Endothelial cell of umbilical vein (primary cell): ENCODE measurements at regions of chr1 and their contacts with region 1.

Region 1: GRCh38 chr1:52552505-52553361 is at the start of gene TUT4:
- DNase-seq: peak; percentile 76
- H3K4me3 ChIP-seq: peak within 1 kb of the TSS; percentile 80 to 97 (median 96)
- H3K27ac ChIP-seq: peak within 1 kb of the TSS; percentile 80
- H3K4me1 ChIP-seq: peaks cover 11% of the 10 kb centered on the region
- H3K27me3 ChIP-seq: no peaks in the 10 kb centered on the region
- CTCF ChIP-seq: peak; percentile 4 to 7
- POLR2A ChIP-seq: no peak
- total RNA-seq, gene TUT4: 40.5 and 41.2 TPM in 2 replicates

Region 2: GRCh38 chr1:51636764-51637522 is 915.8 kb before region 1 on chr1:
- CTCF ChIA-PET with region 1: no interaction called
- POLR2A ChIA-PET with region 1: no interaction called
- dilution Hi-C with region 1: no loop called
- intact Hi-C with region 1: no loop called
- DNase-seq: peak; percentile 64
- H3K4me3 ChIP-seq: no peak overlapping the region
- H3K27ac ChIP-seq: peak overlapping the region; percentile 70
- H3K4me1 ChIP-seq: peaks cover 12% of the 10 kb centered on the region
- H3K27me3 ChIP-seq: no peaks in the 10 kb centered on the region
- CTCF ChIP-seq: no peak
- POLR2A ChIP-seq: no peak

Region 3: GRCh38 chr1:52404116-52404986 is 148.4 kb before region 1 on chr1 and contains the starts of genes ORC1 and PRPF38A:
- CTCF ChIA-PET with region 1: no interaction called
- POLR2A ChIA-PET with region 1: interaction called, 4 read pairs
- dilution Hi-C with region 1: no loop called
- intact Hi-C with region 1: loop called (anchors 1 kb)
- DNase-seq: peak; percentile 97
- H3K4me3 ChIP-seq: peak within 1 kb of the TSS; percentile 57 to 98 (median 83)
- H3K27ac ChIP-seq: peak within 1 kb of the TSS; percentile 98
- H3K4me1 ChIP-seq: peaks cover 14% of the 10 kb centered on the region
- H3K27me3 ChIP-seq: no peaks in the 10 kb centered on the region
- CTCF ChIP-seq: peak; percentile 60 to 75
- POLR2A ChIP-seq: peak; percentile 82
- total RNA-seq, gene ORC1: 11.0 and 12.0 TPM in 2 replicates
- total RNA-seq, gene PRPF38A: 38.4 and 42.0 TPM in 2 replicates

Region 4: DNA sequence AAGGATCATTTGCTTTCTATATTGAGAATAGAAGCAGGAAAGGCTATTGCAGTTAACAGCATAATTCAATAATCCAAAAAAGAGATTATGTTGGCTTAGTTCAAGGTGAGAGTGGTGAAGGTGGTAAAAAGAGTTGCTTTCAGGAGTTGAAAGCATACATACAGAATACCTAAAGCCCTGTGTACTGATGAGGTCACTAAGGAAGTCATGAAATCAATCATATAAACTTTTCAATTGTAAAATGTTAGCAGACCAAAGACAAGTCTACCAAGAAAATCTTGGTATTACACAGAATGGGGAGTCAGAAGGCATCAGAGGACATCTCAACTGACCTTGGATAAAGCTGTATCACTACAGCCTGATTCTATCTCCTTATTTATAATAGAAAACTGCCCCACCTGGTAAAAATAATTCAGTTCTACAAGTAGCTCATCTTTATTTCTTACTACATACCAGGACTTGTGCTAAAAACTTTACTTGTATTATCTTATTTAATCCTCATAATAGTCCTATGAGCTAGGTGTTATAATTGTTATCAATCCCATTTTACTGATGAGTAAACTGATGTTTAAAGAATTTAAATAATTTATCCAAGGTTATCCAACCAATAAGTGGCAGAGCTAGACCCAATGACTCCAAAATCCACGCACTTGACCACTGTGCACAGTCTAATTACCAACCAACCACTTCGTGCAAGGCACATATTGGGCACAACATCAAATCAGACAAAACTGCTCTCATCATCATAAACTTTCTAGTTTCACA is 40.7 kb before region 1 on chr1:
- CTCF ChIA-PET with region 1: no interaction called
- POLR2A ChIA-PET with region 1: no interaction called
- dilution Hi-C with region 1: no loop called
- intact Hi-C with region 1: no loop called
- DNase-seq: no peak
- H3K4me3 ChIP-seq: no peak overlapping the region
- H3K27ac ChIP-seq: no peak overlapping the region
- H3K4me1 ChIP-seq: no peaks in the 10 kb centered on the region
- H3K27me3 ChIP-seq: no peaks in the 10 kb centered on the region
- CTCF ChIP-seq: no peak
- POLR2A ChIP-seq: no peak

Region 5: DNA sequence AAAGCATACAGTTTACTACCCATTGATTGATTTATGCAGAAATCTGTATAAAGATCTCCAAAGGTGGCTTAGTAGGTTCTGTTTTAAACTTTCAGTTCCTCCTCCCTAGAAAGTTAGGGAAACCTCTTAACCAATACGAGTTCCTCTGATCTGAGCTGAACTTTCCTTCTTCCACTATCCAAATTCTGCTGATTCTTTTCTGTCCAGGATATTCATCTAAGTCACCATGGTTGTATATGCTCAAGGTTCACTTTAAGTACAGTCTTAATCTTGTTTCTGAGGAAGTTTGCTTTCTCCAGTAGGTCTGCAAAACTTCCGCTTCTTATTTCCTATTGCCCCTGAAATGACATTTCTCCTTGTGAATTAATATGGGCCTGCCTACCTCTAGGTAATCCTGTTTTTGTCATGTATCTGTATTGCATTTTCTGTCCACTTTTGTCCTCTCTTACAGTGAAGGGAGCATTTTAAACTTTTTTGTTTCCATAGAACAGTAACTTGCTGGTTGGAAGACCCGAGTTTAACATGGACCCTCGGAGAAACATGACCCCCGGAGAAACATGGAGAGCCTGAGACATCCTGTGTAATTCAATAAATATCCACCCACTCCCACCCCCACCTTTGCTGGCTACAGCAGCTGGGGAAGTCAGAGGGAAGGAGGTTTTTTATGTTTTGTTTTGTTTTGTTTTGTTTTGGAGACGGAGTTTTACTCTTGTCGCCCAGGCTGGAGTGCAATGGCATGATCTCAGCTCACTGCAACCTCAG is 16.9 kb after region 1 on chr1:
- CTCF ChIA-PET with region 1: interaction called, 6 read pairs
- POLR2A ChIA-PET with region 1: interaction called, 6 read pairs
- dilution Hi-C with region 1: no loop called
- intact Hi-C with region 1: loop called (anchors 1 kb)
- DNase-seq: peak; percentile 76
- H3K4me3 ChIP-seq: no peak overlapping the region
- H3K27ac ChIP-seq: peak overlapping the region; percentile 18
- H3K4me1 ChIP-seq: peaks cover 12% of the 10 kb centered on the region
- H3K27me3 ChIP-seq: no peaks in the 10 kb centered on the region
- CTCF ChIP-seq: no peak
- POLR2A ChIP-seq: no peak

Region 6: DNA sequence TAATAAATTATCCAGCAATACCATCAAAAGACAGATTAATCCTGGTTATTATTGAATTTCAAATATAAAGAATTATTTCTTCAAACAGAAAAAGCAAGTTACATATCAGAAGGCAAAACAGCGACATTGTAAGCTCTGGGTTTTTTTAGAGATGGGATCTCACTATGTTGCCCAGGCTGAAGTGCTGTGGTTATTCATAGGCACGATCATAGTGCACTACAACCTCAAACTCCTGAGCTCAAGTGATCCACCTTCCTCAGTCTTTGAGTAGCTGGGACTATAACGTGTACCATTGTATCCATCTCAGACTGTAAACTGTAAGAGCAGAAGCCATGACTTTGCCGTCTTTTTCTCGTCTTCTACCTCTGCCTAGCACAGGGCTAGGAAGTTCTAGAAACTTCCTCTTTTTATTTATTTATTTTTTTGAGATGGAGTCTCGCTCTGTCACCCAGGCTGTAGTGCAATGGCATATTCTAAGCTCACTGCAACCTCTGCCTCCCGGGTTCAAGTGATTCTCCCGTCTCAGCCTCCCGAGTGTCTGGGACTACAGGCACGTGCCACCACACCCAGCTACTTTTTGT is 29.5 kb after region 1 on chr1:
- CTCF ChIA-PET with region 1: no interaction called
- POLR2A ChIA-PET with region 1: no interaction called
- dilution Hi-C with region 1: no loop called
- intact Hi-C with region 1: no loop called
- DNase-seq: no peak
- H3K4me3 ChIP-seq: no peak overlapping the region
- H3K27ac ChIP-seq: no peak overlapping the region
- H3K4me1 ChIP-seq: no peaks in the 10 kb centered on the region
- H3K27me3 ChIP-seq: peaks cover 15 to 16% of the 10 kb centered on the region in 2 experiments
- CTCF ChIP-seq: no peak
- POLR2A ChIP-seq: no peak

Region 7: DNA sequence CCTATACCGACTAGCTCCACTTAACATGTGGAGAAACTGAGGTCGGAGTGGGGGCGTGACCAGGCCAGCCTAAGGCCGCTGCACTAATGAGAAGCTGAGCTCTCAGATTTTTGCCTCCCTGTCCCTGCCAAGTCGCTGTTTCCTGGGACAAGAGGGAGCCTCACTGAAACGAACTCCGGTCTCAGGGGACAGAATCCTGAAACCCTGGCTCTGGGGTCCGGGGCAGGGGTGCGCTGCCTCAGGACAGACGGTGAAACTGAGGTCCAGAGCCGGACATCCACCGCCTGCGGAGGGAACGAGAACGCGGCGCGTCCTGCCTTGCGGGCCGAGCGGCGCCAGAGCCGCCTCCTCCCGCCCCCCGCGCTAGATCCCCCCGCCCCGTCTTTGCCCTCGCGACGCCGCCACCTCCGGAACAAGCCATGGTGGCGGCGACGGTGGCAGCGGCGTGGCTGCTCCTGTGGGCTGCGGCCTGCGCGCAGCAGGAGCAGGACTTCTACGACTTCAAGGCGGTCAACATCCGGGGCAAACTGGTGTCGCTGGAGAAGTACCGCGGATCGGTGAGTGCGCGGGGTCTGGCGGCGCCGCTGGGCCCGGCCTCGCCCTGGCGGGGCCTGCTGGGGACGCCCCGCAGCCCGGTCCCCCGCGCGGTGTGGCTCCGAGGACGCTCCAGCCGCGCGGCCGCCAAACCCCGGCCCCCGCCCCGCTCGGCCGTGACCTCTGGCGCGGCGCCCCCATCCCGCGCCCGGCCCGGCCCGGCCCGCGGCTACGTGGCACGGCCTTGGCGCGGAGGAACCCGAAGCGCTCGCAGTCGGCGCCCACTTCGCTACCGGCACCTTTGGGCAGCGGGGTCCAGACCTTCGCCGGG is 49.5 kb after region 1 on chr1 and contains the start of gene GPX7:
- CTCF ChIA-PET with region 1: no interaction called
- POLR2A ChIA-PET with region 1: interaction called, 4 read pairs
- dilution Hi-C with region 1: no loop called
- intact Hi-C with region 1: loop called (anchors 5 kb)
- DNase-seq: peak; percentile 25
- H3K4me3 ChIP-seq: peak within 1 kb of the TSS in 2 of 3 experiments; percentile 34 to 48
- H3K27ac ChIP-seq: peak within 1 kb of the TSS; percentile 20
- H3K4me1 ChIP-seq: peaks cover 8% of the 10 kb centered on the region
- H3K27me3 ChIP-seq: peaks cover 2 to 5% of the 10 kb centered on the region in 2 experiments
- CTCF ChIP-seq: no peak
- POLR2A ChIP-seq: no peak
- total RNA-seq, gene GPX7: 8.9 and 26.3 TPM in 2 replicates

Region 8: DNA sequence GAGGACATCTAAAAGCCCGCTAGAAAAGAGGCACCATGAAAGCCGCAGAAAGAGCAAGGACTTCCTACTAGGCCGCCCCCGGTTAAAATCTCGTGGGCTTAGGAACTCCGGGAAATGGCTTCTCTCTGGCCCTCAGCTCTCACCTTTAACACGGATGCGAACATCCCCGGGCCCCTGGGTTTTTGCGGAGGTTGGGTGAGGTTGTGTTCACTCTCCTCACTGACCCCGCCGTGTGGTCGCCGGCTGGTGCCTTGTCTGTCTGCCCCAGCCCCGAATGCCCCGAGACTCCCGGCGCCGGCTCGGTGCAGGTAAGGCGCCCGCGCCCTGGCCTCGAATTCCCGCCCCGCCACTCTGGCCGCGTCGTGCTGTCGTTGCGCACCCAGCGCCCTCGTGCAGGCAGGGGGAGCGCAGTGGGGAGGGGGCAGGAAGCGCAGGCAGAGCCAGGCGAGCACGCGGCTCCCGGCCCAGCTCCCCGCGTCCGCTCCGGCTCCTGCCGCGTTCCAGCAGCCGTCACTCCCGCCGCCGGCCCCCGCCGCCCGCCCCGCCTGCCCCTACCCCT is 80.1 kb after region 1 on chr1 and contains the start of gene SHISAL2A:
- CTCF ChIA-PET with region 1: no interaction called
- POLR2A ChIA-PET with region 1: no interaction called
- dilution Hi-C with region 1: no loop called
- intact Hi-C with region 1: loop called (anchors 1 kb)
- DNase-seq: no peak
- H3K4me3 ChIP-seq: peak within 1 kb of the TSS in 2 of 3 experiments; percentile 15 to 16
- H3K27ac ChIP-seq: no peak within 1 kb of the TSS
- H3K4me1 ChIP-seq: no peaks in the 10 kb centered on the region
- H3K27me3 ChIP-seq: peaks cover 41 to 42% of the 10 kb centered on the region in 2 experiments
- CTCF ChIP-seq: no peak
- POLR2A ChIP-seq: no peak
- total RNA-seq, gene SHISAL2A: not detected in 2 replicates

Region 9: DNA sequence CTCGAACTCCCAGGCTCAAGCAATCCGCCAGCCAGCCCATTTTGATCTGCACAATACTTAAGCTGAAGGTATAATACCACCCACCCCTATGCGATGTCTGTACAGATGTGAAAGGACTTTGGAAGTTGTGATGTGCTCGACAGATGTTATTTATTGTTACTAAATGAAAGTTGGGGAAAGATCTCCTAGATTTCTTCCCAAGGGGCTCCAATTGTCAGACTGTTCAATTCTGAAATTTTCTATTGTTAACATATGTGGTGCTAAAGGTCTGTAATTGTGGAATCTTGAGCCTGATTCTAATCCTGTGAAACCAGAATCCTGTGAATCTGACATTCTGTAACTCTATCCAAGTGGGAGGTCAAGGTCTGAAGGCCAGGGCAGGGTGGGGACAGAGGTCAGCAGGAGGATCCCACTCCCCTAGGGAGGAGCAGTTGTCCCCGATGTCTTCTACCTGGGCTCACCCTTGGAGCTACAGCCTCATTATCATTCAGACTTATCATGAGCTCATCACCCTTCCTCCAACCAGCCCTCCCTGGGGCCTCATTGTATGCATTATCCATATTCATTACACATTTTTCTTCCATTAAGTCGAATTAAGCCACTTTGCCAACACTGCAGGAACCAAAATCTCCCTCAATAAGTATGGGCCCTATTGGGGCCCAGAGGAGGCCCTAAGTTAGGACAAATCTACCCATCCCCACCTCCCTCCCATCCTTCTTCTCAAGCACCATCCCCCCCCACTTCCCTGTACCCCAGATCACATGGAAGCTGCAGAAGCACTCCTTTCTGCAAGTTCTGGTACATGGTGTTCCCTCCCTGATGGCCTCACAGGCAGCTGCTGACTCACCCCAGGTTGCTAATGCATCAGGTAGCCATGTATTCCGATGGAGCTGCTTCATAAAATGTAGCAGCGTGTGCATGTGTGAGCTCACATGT is 112.5 kb after region 1 on chr1:
- CTCF ChIA-PET with region 1: no interaction called
- POLR2A ChIA-PET with region 1: no interaction called
- dilution Hi-C with region 1: no loop called
- intact Hi-C with region 1: loop called (anchors 5 kb)
- DNase-seq: no peak
- H3K4me3 ChIP-seq: no peak overlapping the region
- H3K27ac ChIP-seq: no peak overlapping the region
- H3K4me1 ChIP-seq: no peaks in the 10 kb centered on the region
- H3K27me3 ChIP-seq: peaks cover 0 to 2% of the 10 kb centered on the region in 2 experiments
- CTCF ChIP-seq: no peak
- POLR2A ChIP-seq: no peak

Region 10: GRCh38 chr1:52686830-52687229 is 134.1 kb after region 1 on chr1:
- CTCF ChIA-PET with region 1: interaction called, 12 read pairs
- POLR2A ChIA-PET with region 1: interaction called, 3 read pairs
- dilution Hi-C with region 1: no loop called
- intact Hi-C with region 1: loop called (anchors 1 kb)
- DNase-seq: no peak
- H3K4me3 ChIP-seq: no peak overlapping the region
- H3K27ac ChIP-seq: no peak overlapping the region
- H3K4me1 ChIP-seq: no peaks in the 10 kb centered on the region
- H3K27me3 ChIP-seq: no peaks in the 10 kb centered on the region
- CTCF ChIP-seq: no peak
- POLR2A ChIP-seq: no peak